CD8-positive, alpha-beta T cell (primary cell): ENCODE measurements at regions of chr3 and their contacts with region 1.

Region 1: DNA sequence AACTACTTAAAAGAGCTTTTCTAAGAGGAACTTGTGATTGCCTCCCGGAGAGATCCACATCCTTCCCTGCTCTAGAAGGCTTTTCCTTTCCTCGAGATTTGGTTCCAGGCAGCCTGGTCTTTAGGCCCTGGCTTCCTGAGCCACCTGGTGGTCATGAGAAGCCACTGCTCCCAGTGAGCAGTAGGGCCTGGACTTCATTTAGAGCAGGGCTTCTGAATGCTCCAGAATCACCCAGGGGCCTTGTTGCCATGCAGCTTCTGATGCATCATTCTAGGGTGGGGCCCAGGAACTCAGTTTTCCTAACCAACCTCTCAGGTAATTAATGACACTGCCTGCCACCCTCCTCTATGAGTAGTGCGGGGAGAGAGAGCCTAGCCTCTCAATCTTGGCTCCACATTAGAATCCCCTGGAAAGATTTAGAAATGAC is 29.6 kb downstream of the PSMD6 start:
- DNase-seq: peak in 7 of 9 experiments; percentile 34 to 79 (median 62)
- ATAC-seq: peak; percentile 92
- H3K4me3 ChIP-seq: no peak overlapping the region
- H3K4me3 Mint-ChIP-seq: no peak overlapping the region
- H3K27ac ChIP-seq: no peak overlapping the region
- H3K27ac Mint-ChIP-seq: peak overlapping the region; percentile 55
- H3K4me1 ChIP-seq: peaks cover 11% of the 10 kb centered on the region
- H3K4me1 Mint-ChIP-seq: peaks cover 60% of the 10 kb centered on the region
- H3K27me3 ChIP-seq: no peaks in the 10 kb centered on the region
- H3K27me3 Mint-ChIP-seq: no peaks in the 10 kb centered on the region
- CTCF ChIP-seq: peak; percentile 77

Region 2: DNA sequence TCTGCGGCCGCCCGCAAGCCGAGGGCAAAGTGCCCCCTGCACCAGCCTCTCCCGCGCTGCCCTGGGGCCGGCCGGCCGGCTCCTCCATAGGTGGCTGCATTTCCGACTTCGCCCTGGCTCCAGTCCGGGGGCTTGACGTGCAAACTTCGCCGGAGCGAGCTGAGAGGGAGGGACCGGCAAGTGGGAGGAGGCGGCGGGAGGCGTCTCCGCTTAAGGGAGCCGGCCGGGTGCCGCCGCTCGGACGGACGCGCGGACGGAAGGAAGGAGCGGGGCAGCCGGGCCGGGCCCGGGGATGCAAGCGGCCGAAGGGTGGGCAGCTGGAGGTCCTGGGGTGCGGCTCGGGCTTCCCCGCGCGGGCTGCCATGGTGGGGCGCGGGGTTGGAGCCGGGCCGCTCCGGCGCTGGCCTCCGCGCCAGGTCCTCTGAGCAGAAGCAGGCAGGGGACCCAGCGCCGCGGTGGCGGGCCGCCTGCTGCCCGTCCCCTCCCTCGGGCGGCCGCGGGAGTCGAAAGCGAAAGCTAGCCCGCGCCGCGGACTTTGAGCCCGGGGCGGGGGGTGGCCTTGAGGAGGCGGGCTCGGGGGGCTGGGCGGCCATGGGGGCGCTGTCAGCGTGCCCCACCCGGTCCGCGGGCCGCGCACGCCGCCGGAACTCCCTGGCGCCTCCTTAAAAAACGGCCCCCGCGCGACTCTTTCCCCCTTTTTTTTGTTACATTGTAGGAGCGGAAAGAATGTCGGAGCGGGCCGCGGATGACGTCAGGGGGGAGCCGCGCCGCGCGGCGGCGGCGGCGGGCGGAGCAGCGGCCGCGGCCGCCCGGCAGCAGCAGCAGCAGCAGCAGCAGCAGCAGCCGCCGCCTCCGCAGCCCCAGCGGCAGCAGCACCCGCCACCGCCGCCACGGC is 81.5 kb before region 1 on chr3 and contains the start of gene SCAANT1:
- CTCF ChIA-PET with region 1: interaction called, 3 read pairs
- POLR2A ChIA-PET with region 1: no interaction called
- intact Hi-C with region 1: loop called in 1 of 2 experiments (anchors 1 kb)
- DNase-seq: peak; percentile 64 to 92 (median 81)
- ATAC-seq: peak; percentile 66
- H3K4me3 ChIP-seq: peak within 1 kb of the TSS; percentile 76 to 85
- H3K4me3 Mint-ChIP-seq: peak within 1 kb of the TSS; percentile 92
- H3K27ac ChIP-seq: peak within 1 kb of the TSS; percentile 82 to 84
- H3K27ac Mint-ChIP-seq: peak within 1 kb of the TSS; percentile 95
- H3K4me1 ChIP-seq: peaks cover 15% of the 10 kb centered on the region
- H3K4me1 Mint-ChIP-seq: peaks cover 42% of the 10 kb centered on the region
- H3K27me3 ChIP-seq: no peaks in the 10 kb centered on the region
- H3K27me3 Mint-ChIP-seq: no peaks in the 10 kb centered on the region
- CTCF ChIP-seq: no peak
- total RNA-seq, gene SCAANT1: not detected

Region 3: DNA sequence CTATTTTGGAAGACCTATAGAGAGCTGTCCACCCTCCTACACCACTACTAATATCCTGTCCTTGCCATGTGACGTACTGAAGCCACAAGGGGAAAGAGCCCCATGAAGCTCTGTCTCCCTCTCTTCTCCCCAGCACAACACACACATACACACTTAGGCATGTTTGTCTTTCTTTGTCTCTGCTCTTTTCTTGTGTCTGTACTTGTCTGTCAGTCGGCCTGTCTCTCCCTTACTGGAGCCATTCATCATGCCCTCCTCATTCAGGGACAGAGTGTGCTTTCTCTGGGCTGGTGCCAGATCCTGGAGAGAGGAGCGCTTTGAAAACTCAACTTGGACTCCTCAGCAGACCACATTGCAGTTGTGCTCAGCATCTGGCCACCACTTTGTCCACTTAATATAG is 17.9 kb before region 1 on chr3:
- CTCF ChIA-PET with region 1: interaction called, 187 read pairs
- POLR2A ChIA-PET with region 1: interaction called, 6 read pairs
- intact Hi-C with region 1: loop called in 1 of 2 experiments (anchors 2 kb)
- DNase-seq: no peak
- ATAC-seq: no peak
- H3K4me3 ChIP-seq: no peak overlapping the region
- H3K4me3 Mint-ChIP-seq: peak overlapping the region; percentile 42
- H3K27ac ChIP-seq: no peak overlapping the region
- H3K27ac Mint-ChIP-seq: peak overlapping the region; percentile 87
- H3K4me1 ChIP-seq: peaks cover 95% of the 10 kb centered on the region
- H3K4me1 Mint-ChIP-seq: peaks cover 98% of the 10 kb centered on the region
- H3K27me3 ChIP-seq: no peaks in the 10 kb centered on the region
- H3K27me3 Mint-ChIP-seq: no peaks in the 10 kb centered on the region
- CTCF ChIP-seq: no peak

Region 4: GRCh38 chr3:64011685-64012084 is 18.0 kb after region 1 on chr3:
- CTCF ChIA-PET with region 1: interaction called, 32 read pairs
- POLR2A ChIA-PET with region 1: interaction called, 4 read pairs
- intact Hi-C with region 1: no loop called
- DNase-seq: no peak
- ATAC-seq: no peak
- H3K4me3 ChIP-seq: no peak overlapping the region
- H3K4me3 Mint-ChIP-seq: no peak overlapping the region
- H3K27ac ChIP-seq: no peak overlapping the region
- H3K27ac Mint-ChIP-seq: peak overlapping the region; percentile 10
- H3K4me1 ChIP-seq: no peaks in the 10 kb centered on the region
- H3K4me1 Mint-ChIP-seq: peaks cover 36% of the 10 kb centered on the region
- H3K27me3 ChIP-seq: no peaks in the 10 kb centered on the region
- H3K27me3 Mint-ChIP-seq: no peaks in the 10 kb centered on the region
- CTCF ChIP-seq: no peak

Region 5: DNA sequence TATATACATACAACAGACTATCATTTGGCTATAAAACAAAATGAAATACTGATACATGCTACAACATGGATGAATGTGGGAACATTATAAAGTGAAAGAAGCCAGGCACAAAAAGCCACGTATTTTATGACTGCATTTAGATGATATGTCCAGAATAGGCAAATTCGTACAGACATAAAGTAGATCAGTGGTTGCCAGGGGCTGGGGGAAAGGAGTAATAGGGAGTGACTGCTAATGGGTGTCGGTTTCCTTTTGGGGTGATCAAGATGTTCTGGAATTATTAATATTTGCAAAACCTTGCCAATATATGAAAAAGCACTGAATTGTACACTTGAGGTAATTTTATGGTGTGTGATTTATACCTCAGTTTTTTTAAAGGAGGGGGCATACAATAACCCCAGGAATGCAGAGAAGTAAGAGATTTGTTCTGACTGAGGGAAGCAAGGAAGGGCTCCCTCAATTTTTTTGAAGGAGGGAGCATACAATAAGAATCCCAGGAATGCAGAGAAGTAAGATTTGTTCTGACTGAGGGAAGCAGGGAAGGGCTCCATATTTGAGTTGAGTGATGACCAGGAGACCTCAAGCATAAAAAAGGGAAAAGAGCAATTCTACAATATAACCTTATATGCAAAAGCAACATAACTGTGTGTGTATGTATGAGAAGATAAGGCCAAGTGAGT is 23.4 kb after region 1 on chr3:
- CTCF ChIA-PET with region 1: interaction called, 23 read pairs
- POLR2A ChIA-PET with region 1: no interaction called
- intact Hi-C with region 1: no loop called
- DNase-seq: no peak
- ATAC-seq: no peak
- H3K4me3 ChIP-seq: no peak overlapping the region
- H3K4me3 Mint-ChIP-seq: no peak overlapping the region
- H3K27ac ChIP-seq: no peak overlapping the region
- H3K27ac Mint-ChIP-seq: peak overlapping the region; percentile 50
- H3K4me1 ChIP-seq: peaks cover 16% of the 10 kb centered on the region
- H3K4me1 Mint-ChIP-seq: peaks cover 47% of the 10 kb centered on the region
- H3K27me3 ChIP-seq: no peaks in the 10 kb centered on the region
- H3K27me3 Mint-ChIP-seq: no peaks in the 10 kb centered on the region
- CTCF ChIP-seq: no peak